Breast epithelium (tissue), 4 donors: ENCODE measurements at regions of chr4 and their contacts with region 1.

Region 1: GRCh38 chr4:88879991-88880390 is 177.0 kb downstream of the FAM13A start:
- DNase-seq: no peak
- H3K4me3 ChIP-seq: no peak overlapping the region
- H3K27ac ChIP-seq: no peak overlapping the region
- H3K4me1 ChIP-seq: no peaks in the 10 kb centered on the region
- H3K27me3 ChIP-seq: no peaks in the 10 kb centered on the region
- CTCF ChIP-seq: no peak
- POLR2A ChIP-seq: no peak

Region 2: DNA sequence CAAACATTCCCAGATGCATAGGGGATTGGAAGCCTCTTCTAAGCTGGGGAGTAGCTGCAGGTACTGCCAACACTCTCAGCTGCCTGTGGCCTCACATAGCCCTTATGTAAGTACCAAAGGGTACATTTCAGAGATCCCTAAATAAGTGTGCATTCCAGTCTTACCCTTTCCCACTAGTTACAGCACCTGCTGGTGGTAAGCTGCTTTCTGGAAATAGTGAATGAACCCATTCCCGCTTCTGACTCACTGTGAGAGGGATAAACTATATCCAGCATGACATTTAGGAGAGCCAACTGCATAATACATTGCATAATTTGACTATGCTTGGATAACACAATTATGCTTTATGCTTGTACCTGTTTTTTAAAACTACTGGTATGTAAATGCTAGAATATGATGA is 28.0 kb after region 1 on chr4:
- intact Hi-C with region 1: no loop called
- DNase-seq: no peak
- H3K4me3 ChIP-seq: no peak overlapping the region
- H3K27ac ChIP-seq: no peak overlapping the region
- H3K4me1 ChIP-seq: no peaks in the 10 kb centered on the region
- H3K27me3 ChIP-seq: no peaks in the 10 kb centered on the region
- CTCF ChIP-seq: no peak
- POLR2A ChIP-seq: no peak

Region 3: GRCh38 chr4:88919056-88919455 is 39.1 kb after region 1 on chr4:
- intact Hi-C with region 1: no loop called
- DNase-seq: no peak
- H3K4me3 ChIP-seq: no peak overlapping the region
- H3K27ac ChIP-seq: no peak overlapping the region
- H3K4me1 ChIP-seq: no peaks in the 10 kb centered on the region
- H3K27me3 ChIP-seq: no peaks in the 10 kb centered on the region
- CTCF ChIP-seq: no peak
- POLR2A ChIP-seq: no peak

Region 4: GRCh38 chr4:89268679-89269078 is 388.7 kb after region 1 on chr4:
- intact Hi-C with region 1: loop called (anchors 10 kb)
- DNase-seq: no peak
- H3K4me3 ChIP-seq: no peak overlapping the region
- H3K27ac ChIP-seq: no peak overlapping the region
- H3K4me1 ChIP-seq: no peaks in the 10 kb centered on the region
- H3K27me3 ChIP-seq: no peaks in the 10 kb centered on the region
- CTCF ChIP-seq: no peak
- POLR2A ChIP-seq: no peak

Region 5: DNA sequence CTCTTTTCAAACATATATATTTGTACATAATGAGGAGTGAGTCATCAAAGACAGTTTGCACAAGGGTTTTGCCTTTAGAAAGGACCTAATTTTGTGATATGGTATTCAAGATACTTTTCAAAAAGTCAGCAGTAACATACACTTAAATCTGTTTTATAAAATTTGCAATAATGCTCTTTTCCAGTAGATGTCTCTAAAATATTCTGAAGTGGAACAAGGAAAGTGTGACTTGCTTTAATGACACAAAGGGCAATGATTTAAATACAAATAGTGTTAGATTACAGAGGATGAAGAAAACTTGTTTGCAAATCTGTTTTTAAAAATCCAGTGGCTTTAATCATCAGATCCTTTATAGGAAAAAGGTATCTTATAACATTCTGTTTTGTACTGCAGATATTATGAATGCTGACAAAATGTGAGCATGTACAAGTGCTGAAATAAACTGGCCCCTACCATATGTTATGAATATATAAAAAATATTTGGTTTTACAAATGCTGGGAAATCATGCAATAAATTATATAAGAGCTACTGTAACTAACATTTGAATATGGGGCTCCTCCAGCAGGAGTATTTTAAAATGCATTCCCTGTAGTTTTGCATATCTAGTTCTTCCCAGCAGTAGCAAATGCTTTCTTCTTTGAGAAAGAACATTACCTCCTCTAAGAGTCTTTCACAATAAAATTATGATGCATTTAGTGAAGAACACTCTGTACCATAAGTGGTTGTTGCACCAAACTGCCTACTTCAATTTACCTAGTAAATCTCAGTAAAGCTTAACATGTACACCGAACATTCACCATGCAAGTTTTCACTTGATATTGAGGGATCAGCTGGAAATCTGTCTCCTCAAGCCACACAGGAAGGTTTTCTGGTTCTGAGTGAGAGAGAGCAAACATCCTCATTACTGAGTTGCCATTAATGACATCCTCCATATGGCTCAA is 1034.9 kb after region 1 on chr4:
- intact Hi-C with region 1: no loop called
- DNase-seq: no peak
- H3K4me3 ChIP-seq: no peak overlapping the region
- H3K27ac ChIP-seq: no peak overlapping the region
- H3K4me1 ChIP-seq: no peaks in the 10 kb centered on the region
- H3K27me3 ChIP-seq: no peaks in the 10 kb centered on the region
- CTCF ChIP-seq: no peak
- POLR2A ChIP-seq: no peak